Right ventricle myocardium inferior (tissue), 1 donor: ENCODE measurements at regions of chr12 and their contacts with region 1.

Region 1: GRCh38 chr12:104064031-104064822 is at the start of gene HCFC2:
- DNase-seq: peak; percentile 96
- ATAC-seq: peak; percentile 99
- total RNA-seq, gene HCFC2: 9.5 TPM

Region 2: DNA sequence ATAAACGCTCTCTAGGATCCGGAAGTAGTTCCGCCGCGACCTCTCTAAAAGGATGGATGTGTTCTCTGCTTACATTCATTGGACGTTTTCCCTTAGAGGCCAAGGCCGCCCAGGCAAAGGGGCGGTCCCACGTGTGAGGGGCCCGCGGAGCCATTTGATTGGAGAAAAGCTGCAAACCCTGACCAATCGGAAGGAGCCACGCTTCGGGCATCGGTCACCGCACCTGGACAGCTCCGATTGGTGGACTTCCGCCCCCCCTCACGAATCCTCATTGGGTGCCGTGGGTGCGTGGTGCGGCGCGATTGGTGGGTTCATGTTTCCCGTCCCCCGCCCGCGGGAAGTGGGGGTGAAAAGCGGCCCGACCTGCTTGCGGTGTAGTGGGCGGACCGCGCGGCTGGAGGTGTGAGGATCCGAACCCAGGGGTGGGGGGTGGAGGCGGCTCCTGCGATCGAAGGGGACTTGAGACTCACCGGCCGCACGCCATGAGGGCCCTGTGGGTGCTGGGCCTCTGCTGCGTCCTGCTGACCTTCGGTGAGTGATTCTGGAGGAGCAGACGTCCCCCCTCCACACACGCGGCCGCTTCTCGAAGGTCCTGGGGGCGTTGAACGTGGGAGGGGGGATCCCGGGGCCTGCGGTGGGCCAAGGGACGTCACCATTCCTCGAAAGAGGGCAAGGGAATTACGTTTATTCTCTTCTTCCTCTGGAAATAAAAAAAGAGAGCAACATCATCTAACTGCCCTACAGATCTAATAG is 134.0 kb before region 1 on chr12 and contains the start of gene HSP90B1:
- intact Hi-C with region 1: loop called (anchors 5 kb)
- DNase-seq: peak; percentile 100
- ATAC-seq: peak; percentile 96
- total RNA-seq, gene HSP90B1: 402 TPM

Region 3: GRCh38 chr12:103965590-103966504 is 98.4 kb before region 1 on chr12 and contains the start of gene TDG:
- intact Hi-C with region 1: loop called (anchors 2 kb)
- DNase-seq: peak; percentile 99
- ATAC-seq: peak; percentile 98
- total RNA-seq, gene TDG: 9.7 TPM

Region 4: DNA sequence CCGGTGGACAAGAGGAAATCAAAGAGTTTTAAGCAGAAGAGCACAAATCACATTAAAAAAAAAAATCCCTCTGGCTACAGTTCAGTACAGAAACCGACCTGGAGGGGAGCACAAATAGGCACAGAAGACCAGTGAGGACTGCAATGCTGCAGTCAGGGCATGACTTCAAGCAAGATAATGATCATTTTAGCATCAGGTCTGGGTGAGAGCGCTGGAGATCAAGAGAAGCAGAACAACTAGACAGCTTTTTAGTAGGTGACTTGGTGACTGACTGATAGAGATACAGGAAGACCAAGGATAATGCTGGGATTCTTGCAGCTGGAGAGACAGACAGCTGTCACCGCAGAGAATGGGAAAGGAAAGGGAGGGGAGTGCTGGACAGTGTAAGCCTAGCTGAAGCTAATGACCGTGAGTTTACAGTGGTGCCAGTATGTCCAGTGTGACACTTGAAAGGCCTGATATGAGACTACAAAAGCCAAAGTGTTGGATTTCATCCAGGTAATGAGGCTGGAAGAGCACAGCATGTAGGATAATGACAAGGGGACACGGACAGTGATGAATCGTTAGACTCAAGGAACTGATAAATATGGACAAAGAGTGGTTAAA is 68.2 kb after region 1 on chr12:
- intact Hi-C with region 1: loop called (anchors 5 kb)
- DNase-seq: no peak
- ATAC-seq: peak; percentile 86